ENCODE measurements at regions of chr5 and their contacts with region 1.

Region 1: DNA sequence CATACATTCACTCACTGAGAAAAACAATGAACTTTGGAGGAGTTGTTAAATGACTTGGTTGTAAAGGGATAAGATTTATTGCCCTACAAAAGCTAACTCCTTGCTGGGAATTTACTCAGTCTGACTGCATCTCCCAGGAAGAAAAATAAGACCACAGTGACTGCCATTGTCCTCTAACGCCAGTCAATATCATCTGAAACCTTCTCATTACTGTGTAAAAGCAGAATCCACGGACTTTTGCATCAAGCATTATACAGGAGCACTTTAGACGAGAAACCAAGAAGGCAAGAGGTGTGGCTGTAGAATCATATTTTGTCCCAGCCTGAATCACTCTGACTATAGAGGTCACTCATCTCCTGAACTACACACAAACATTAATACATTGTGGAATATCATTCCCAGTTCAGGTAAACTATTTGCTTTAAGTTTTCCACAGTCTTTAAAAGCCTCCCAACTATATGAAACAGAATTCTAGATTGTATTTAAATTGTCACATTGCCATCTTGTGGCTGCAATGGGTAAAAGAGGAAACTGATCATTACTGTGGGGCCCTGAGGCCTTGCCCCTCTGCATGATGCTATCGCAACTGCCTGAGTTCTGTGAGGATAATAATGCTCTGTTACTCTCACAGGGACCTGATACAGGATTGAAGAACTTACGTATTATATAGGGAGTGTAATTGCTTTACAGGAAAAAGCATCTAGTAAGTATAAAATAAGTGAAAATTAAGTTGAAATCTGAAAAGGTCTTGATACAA is 142.9 kb downstream of the SLCO4C1 start:
- DNase-seq: peak in 1 of 2 experiments; percentile 59
- H3K4me3 ChIP-seq: no peak overlapping the region
- H3K4me3 Mint-ChIP-seq: no peak overlapping the region
- H3K27ac Mint-ChIP-seq: peak overlapping the region; percentile 33
- H3K4me1 ChIP-seq: peaks cover 20% of the 10 kb centered on the region
- H3K4me1 Mint-ChIP-seq: peaks cover 33% of the 10 kb centered on the region
- H3K27me3 ChIP-seq: no peaks in the 10 kb centered on the region
- H3K27me3 Mint-ChIP-seq: no peaks in the 10 kb centered on the region
- CTCF ChIP-seq: peak; percentile 58 to 61

Region 2: DNA sequence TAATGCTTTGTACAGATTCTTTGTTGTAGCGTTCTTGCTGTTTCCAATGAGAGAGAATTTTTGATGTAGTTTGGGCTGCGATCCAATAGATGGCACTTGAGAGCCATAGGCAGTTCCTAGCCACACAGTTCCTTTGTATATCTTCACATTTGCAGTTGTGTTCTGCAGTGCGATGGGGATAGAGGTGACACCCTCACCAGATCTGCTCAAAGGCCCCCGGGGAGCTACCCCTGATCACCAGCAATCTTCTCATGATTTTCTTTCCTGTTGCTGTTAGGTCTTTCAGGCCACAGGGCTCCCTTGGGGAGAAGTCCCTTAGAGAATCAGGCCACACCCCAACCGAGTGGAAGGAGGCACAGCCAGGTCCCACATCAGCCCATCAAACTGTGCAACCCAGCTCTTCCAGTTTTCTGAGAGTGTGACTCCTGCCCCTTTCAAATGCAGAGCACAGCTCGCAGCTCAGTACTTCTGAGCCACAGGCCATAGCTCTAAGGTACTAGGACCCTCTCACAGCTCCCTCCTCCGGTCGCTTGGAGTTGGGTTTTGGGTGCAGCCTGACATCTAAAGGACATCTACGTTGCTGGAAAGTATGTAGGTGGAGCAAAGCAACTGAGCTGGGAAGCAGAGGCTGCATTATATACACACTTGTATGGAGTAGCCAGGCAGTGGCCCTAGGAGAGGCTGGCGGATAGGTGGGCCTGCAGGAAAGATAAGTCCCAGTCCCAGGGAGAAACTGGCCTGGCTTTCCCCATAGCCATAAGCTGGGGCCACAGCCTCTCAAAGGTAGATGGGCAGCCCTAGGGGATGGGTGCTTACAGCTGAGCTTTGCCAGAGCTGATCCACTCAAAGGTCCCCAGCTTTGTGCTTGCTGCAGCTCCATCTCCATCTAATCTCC is 210.6 kb before region 1 on chr5:
- CTCF ChIA-PET with region 1: interaction called, 3 read pairs
- POLR2A ChIA-PET with region 1: no interaction called
- intact Hi-C with region 1: loop called (anchors 1 kb)
- DNase-seq: peak; percentile 39 to 59
- H3K4me3 ChIP-seq: no peak overlapping the region
- H3K4me3 Mint-ChIP-seq: no peak overlapping the region
- H3K27ac Mint-ChIP-seq: no peak overlapping the region
- H3K4me1 ChIP-seq: no peaks in the 10 kb centered on the region
- H3K4me1 Mint-ChIP-seq: no peaks in the 10 kb centered on the region
- H3K27me3 ChIP-seq: no peaks in the 10 kb centered on the region; the same call in 1 of the 2 replicates
- H3K27me3 Mint-ChIP-seq: peaks cover 3% of the 10 kb centered on the region
- CTCF ChIP-seq: peak; percentile 69 to 93

Region 3: DNA sequence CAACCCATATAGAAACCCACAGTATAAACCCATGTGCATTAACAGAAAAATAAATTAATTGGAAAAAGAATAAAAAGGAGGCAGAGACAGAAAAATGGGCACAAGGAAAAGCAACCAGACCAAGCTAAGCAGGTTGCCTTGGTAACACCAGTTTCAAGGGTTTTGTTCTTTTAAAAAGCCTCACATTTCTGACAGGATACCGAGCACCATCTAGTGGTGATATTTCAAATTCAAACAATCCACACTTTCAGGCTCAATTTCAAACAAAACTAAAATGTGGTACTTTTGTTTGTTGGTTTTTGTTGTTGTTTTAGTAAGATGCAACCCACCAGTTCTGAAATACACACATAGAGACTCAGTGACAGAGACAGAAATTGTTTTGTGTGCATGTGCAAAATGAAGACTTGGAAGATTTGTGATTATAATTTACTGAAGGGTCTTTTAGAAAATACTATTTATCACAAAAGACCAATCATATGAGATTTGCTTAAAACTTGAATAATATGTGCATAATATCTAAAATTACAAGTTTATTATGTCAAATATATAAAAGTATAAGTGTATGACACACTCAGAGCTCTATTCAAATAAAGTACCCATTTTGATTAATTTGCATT is 175.3 kb before region 1 on chr5:
- CTCF ChIA-PET with region 1: no interaction called
- POLR2A ChIA-PET with region 1: interaction called, 4 read pairs
- intact Hi-C with region 1: loop called (anchors 5 kb)
- DNase-seq: peak in 1 of 2 experiments; percentile 52
- H3K4me3 ChIP-seq: no peak overlapping the region
- H3K4me3 Mint-ChIP-seq: no peak overlapping the region
- H3K27ac Mint-ChIP-seq: no peak overlapping the region
- H3K4me1 ChIP-seq: no peaks in the 10 kb centered on the region
- H3K4me1 Mint-ChIP-seq: no peaks in the 10 kb centered on the region
- H3K27me3 ChIP-seq: no peaks in the 10 kb centered on the region
- H3K27me3 Mint-ChIP-seq: peaks cover 3% of the 10 kb centered on the region
- CTCF ChIP-seq: peak; percentile 66 to 70

Region 4: DNA sequence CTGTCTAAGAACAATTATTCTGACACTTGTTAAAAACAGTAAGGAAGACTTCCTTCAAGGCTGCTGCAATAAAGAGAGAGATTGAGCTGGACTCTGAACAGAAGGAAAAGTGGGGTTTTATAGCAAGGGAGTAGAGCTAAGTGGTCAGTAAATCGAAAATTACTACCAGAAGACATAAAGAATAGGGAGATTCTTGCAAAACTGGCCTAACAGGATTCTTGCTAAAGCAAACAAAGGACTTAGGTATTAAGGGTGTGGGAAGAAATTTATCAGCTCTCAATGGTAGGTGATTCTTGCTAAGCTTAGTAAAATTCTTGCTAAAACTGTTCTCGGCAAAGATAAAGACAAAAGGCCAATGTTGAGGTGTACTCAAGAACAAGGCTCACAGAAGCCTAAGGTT is 157.6 kb before region 1 on chr5:
- CTCF ChIA-PET with region 1: no interaction called
- POLR2A ChIA-PET with region 1: no interaction called
- intact Hi-C with region 1: loop called (anchors 1 kb)
- DNase-seq: peak in 1 of 2 experiments; percentile 79
- H3K4me3 ChIP-seq: no peak overlapping the region
- H3K4me3 Mint-ChIP-seq: peak overlapping the region; percentile 4
- H3K27ac Mint-ChIP-seq: peak overlapping the region; percentile 15
- H3K4me1 ChIP-seq: peaks cover 33% of the 10 kb centered on the region
- H3K4me1 Mint-ChIP-seq: peaks cover 37% of the 10 kb centered on the region
- H3K27me3 ChIP-seq: no peaks in the 10 kb centered on the region
- H3K27me3 Mint-ChIP-seq: no peaks in the 10 kb centered on the region
- CTCF ChIP-seq: no peak

Region 5: GRCh38 chr5:102090770-102091381 is 62.3 kb before region 1 on chr5:
- CTCF ChIA-PET with region 1: no interaction called
- POLR2A ChIA-PET with region 1: no interaction called
- intact Hi-C with region 1: loop called (anchors 1 kb)
- DNase-seq: peak; percentile 68 to 74
- H3K4me3 ChIP-seq: no peak overlapping the region
- H3K4me3 Mint-ChIP-seq: no peak overlapping the region
- H3K27ac Mint-ChIP-seq: no peak overlapping the region
- H3K4me1 ChIP-seq: no peaks in the 10 kb centered on the region; the same call in 1 of the 2 replicates
- H3K4me1 Mint-ChIP-seq: peaks cover 13% of the 10 kb centered on the region
- H3K27me3 ChIP-seq: no peaks in the 10 kb centered on the region
- H3K27me3 Mint-ChIP-seq: no peaks in the 10 kb centered on the region
- CTCF ChIP-seq: peak; percentile 71 to 83

Region 6: GRCh38 chr5:102106599-102106998 is 46.6 kb before region 1 on chr5:
- CTCF ChIA-PET with region 1: no interaction called
- POLR2A ChIA-PET with region 1: no interaction called
- intact Hi-C with region 1: loop called (anchors 1 kb)
- DNase-seq: peak in 1 of 2 experiments; percentile 4
- H3K4me3 ChIP-seq: no peak overlapping the region
- H3K4me3 Mint-ChIP-seq: no peak overlapping the region
- H3K27ac Mint-ChIP-seq: no peak overlapping the region
- H3K4me1 ChIP-seq: no peaks in the 10 kb centered on the region
- H3K4me1 Mint-ChIP-seq: no peaks in the 10 kb centered on the region
- H3K27me3 ChIP-seq: no peaks in the 10 kb centered on the region
- H3K27me3 Mint-ChIP-seq: no peaks in the 10 kb centered on the region
- CTCF ChIP-seq: no peak

Region 7: DNA sequence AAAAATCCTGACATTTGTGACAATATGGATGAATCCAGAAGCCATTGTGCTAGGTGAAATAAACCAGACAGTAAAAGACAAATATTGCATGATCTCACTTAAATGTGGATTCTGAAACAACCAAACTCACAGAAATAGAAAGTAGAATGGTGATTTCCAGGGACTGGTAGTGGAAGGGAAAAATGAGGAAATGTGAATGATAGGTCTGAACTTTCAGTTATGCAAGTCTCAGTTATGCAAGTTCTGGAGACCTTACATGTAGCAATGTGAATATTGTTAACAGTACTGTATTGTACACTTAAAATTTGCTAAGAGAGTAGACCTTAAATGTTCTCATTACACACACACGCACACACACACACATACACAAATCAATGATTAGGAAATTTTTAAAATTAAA is 58.0 kb after region 1 on chr5:
- CTCF ChIA-PET with region 1: no interaction called
- POLR2A ChIA-PET with region 1: no interaction called
- intact Hi-C with region 1: no loop called
- DNase-seq: no peak
- H3K4me3 ChIP-seq: no peak overlapping the region
- H3K4me3 Mint-ChIP-seq: no peak overlapping the region
- H3K27ac Mint-ChIP-seq: no peak overlapping the region
- H3K4me1 ChIP-seq: no peaks in the 10 kb centered on the region
- H3K4me1 Mint-ChIP-seq: peaks cover 9% of the 10 kb centered on the region
- H3K27me3 ChIP-seq: no peaks in the 10 kb centered on the region
- H3K27me3 Mint-ChIP-seq: no peaks in the 10 kb centered on the region
- CTCF ChIP-seq: no peak